Sigmoid colon (tissue), 7 donors: ENCODE measurements at regions of chr7 and their contacts with region 1.

Region 1: GRCh38 chr7:132519548-132520335 is 56.5 kb downstream of the PLXNA4 start:
- DNase-seq: no peak
- H3K4me3 ChIP-seq: no peak overlapping the region
- H3K27ac ChIP-seq: peak overlapping the region in 2 of 4 donors; percentile 8 to 54
- H3K4me1 ChIP-seq: peaks cover 0 to 38% (median 29%) of the 10 kb centered on the region in 4 donors
- H3K27me3 ChIP-seq: no peaks in the 10 kb centered on the region
- CTCF ChIP-seq: no peak
- EP300 ChIP-seq: no peak
- POLR2A ChIP-seq: no peak

Region 2: GRCh38 chr7:132318352-132319318 is 201.1 kb before region 1 on chr7:
- intact Hi-C with region 1: no loop called
- DNase-seq: peak; percentile 92
- H3K4me3 ChIP-seq: no peak overlapping the region
- H3K27ac ChIP-seq: no peak overlapping the region
- H3K4me1 ChIP-seq: peaks cover 0 to 13% (median 12%) of the 10 kb centered on the region in 4 donors
- H3K27me3 ChIP-seq: peaks cover 0 to 23% (median 0%) of the 10 kb centered on the region in 3 donors
- CTCF ChIP-seq: peak; percentile 73 to 94 (median 84)
- EP300 ChIP-seq: no peak
- POLR2A ChIP-seq: no peak

Region 3: GRCh38 chr7:132575419-132575981 is 55.8 kb after region 1 on chr7:
- intact Hi-C with region 1: loop called (anchors 2 kb)
- DNase-seq: peak; percentile 80
- H3K4me3 ChIP-seq: peak overlapping the region; percentile 44 to 59 (median 58)
- H3K27ac ChIP-seq: peak overlapping the region in 1 of 4 donors; percentile 77
- H3K4me1 ChIP-seq: peaks cover 0 to 39% (median 24%) of the 10 kb centered on the region in 4 donors
- H3K27me3 ChIP-seq: peaks cover 0 to 55% (median 24%) of the 10 kb centered on the region in 3 donors
- CTCF ChIP-seq: peak in 1 of 4 experiments; percentile 10
- EP300 ChIP-seq: no peak
- POLR2A ChIP-seq: no peak